Esophagus muscularis mucosa (tissue), 4 donors: ENCODE measurements at regions of chr11 and their contacts with region 1.

Region 1: GRCh38 chr11:36564376-36565030 is 3.3 kb upstream of the RAG1 start:
- DNase-seq: no peak
- H3K4me3 ChIP-seq: peak overlapping the region; percentile 38 to 54 (median 41)
- H3K27ac ChIP-seq: no peak overlapping the region
- H3K4me1 ChIP-seq: peaks cover 0 to 7% (median 5%) of the 10 kb centered on the region in 4 donors
- H3K27me3 ChIP-seq: no peaks in the 10 kb centered on the region
- CTCF ChIP-seq: peak; percentile 66 to 72 (median 70)
- EP300 ChIP-seq: no peak
- POLR2A ChIP-seq: no peak

Region 2: GRCh38 chr11:36622431-36623136 is 58.1 kb after region 1 on chr11:
- intact Hi-C with region 1: loop called (anchors 5 kb)
- DNase-seq: no peak
- H3K4me3 ChIP-seq: no peak overlapping the region
- H3K27ac ChIP-seq: no peak overlapping the region
- H3K4me1 ChIP-seq: peaks cover 11 to 18% (median 17%) of the 10 kb centered on the region in 4 donors
- H3K27me3 ChIP-seq: no peaks in the 10 kb centered on the region
- CTCF ChIP-seq: peak; percentile 26 to 46 (median 40)
- EP300 ChIP-seq: no peak
- POLR2A ChIP-seq: no peak

Region 3: GRCh38 chr11:36672813-36673450 is 108.4 kb after region 1 on chr11:
- intact Hi-C with region 1: loop called (anchors 1 kb)
- DNase-seq: no peak
- H3K4me3 ChIP-seq: no peak overlapping the region
- H3K27ac ChIP-seq: no peak overlapping the region
- H3K4me1 ChIP-seq: no peaks in the 10 kb centered on the region
- H3K27me3 ChIP-seq: no peaks in the 10 kb centered on the region
- CTCF ChIP-seq: peak; percentile 78 to 85 (median 83)
- EP300 ChIP-seq: no peak
- POLR2A ChIP-seq: no peak

Region 4: GRCh38 chr11:36746886-36747710 is 182.6 kb after region 1 on chr11:
- intact Hi-C with region 1: loop called (anchors 10 kb)
- DNase-seq: peak; percentile 95
- H3K4me3 ChIP-seq: no peak overlapping the region
- H3K27ac ChIP-seq: no peak overlapping the region
- H3K4me1 ChIP-seq: peaks cover 0 to 18% (median 10%) of the 10 kb centered on the region in 4 donors
- H3K27me3 ChIP-seq: no peaks in the 10 kb centered on the region
- CTCF ChIP-seq: peak; percentile 87 to 97 (median 96)
- EP300 ChIP-seq: no peak
- POLR2A ChIP-seq: no peak